Activated CD4-positive, alpha-beta T cell treated with anti-CD3 and anti-CD28 coated beads, Interleukin-2, amount 10 ng/mL, durations not matched to agents 7 days and 5 days (primary cell): ENCODE measurements at regions of chr10 and their contacts with region 1.

Region 1: GRCh38 chr10:30374353-30374752 is 25.3 kb upstream of the MTPAP start:
- DNase-seq: no peak
- H3K4me3 Mint-ChIP-seq: no peak overlapping the region
- H3K27ac Mint-ChIP-seq: no peak overlapping the region
- H3K4me1 Mint-ChIP-seq: peaks cover 27% of the 10 kb centered on the region
- H3K27me3 Mint-ChIP-seq: peaks cover 23% of the 10 kb centered on the region

Region 2: GRCh38 chr10:30207485-30208052 is 166.8 kb before region 1 on chr10:
- CTCF ChIA-PET with region 1: no interaction called
- POLR2A ChIA-PET with region 1: no interaction called
- DNase-seq: no peak
- H3K4me3 Mint-ChIP-seq: no peak overlapping the region
- H3K27ac Mint-ChIP-seq: no peak overlapping the region
- H3K4me1 Mint-ChIP-seq: no peaks in the 10 kb centered on the region
- H3K27me3 Mint-ChIP-seq: peaks cover 7% of the 10 kb centered on the region

Region 3: GRCh38 chr10:30359373-30360206 is 14.8 kb before region 1 on chr10:
- CTCF ChIA-PET with region 1: interaction called, 10 read pairs
- POLR2A ChIA-PET with region 1: no interaction called
- DNase-seq: peak; percentile 66
- H3K4me3 Mint-ChIP-seq: no peak overlapping the region
- H3K27ac Mint-ChIP-seq: no peak overlapping the region
- H3K4me1 Mint-ChIP-seq: peaks cover 5% of the 10 kb centered on the region
- H3K27me3 Mint-ChIP-seq: peaks cover 8% of the 10 kb centered on the region